A549 (cell line): ENCODE measurements at regions of chr15 and their contacts with region 1.

Region 1: DNA sequence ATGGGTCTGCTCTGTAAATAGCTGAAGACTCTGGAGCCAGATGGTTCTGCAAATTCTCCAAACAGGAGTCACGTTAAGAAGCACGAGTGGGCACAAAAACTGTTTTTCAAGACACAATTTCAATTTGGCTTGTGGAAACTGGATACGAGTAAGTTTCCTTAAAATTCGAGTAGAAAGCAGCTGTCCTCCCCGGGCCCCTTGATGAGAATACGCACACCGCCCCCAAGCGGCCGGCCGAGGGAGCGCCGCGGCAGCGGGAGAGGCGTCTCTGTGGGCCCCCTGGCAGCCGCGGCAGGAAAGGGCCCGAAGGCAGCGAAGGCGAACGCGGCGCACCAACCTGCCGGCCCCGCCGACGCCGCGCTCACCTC is 778 bp upstream of the THBS1 start:
- DNase-seq: peak; percentile 54 to 86
- ATAC-seq: peak; percentile 76 to 81
- H3K4me3 ChIP-seq: peak overlapping the region; percentile 95
- H3K27ac ChIP-seq: peak overlapping the region; percentile 87 to 99
- H3K4me1 ChIP-seq: peaks cover 37% of the 10 kb centered on the region
- CTCF ChIP-seq: peak; percentile 82
- EP300 ChIP-seq: no peak
- POLR2A ChIP-seq: no peak
- RAD21 ChIP-seq: peak; percentile 80 to 94

Region 2: DNA sequence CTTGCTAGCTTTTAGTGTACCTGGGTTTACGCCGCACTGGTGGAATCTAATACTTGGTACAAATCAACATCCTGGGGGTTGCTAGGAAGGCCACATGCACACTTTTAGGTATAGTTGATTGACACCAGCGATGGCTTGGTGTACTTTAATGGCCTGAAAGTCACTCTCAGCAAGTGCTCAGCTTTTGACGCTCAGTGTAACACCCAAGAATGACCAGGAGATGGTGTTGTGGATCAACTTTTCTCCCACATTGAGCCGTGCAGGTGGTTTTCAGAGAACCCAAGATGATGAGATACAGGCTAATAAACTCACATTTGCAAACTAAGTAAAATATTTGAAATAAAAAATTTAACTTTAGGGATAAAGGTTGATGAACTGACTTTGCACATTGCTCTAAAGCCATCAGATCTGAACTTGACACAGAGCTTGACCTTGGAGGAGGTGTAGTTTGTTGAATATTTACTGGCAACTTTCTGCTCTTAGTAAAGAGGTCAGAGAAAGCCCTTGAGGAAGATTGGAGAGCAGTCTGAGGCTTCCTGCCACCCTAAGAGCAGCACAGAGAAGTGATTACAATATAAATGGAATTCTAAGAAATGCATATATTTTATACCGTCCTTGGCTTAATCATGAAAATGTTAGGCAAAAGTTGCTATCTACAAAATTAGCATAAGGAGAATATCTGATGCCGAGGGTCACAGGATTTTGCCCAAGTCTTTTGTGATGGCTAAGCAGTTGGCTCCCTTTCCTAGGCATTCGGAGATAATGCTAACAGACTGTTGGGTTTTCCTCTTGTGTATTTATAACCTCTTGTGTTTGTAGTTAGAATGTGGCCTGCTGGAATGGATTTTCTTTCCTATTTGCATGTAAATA is 872.1 kb before region 1 on chr15:
- CTCF ChIA-PET with region 1: interaction called, 29 read pairs
- POLR2A ChIA-PET with region 1: interaction called, 3 read pairs
- DNase-seq: peak; percentile 25 to 57
- ATAC-seq: peak; percentile 84 to 91
- H3K4me3 ChIP-seq: no peak overlapping the region
- H3K27ac ChIP-seq: 0 out of 6 replicates have a peak overlapping the region, but pooled peaks of 1 of the 2 experiments have one; percentile 16
- H3K4me1 ChIP-seq: peaks cover 6% of the 10 kb centered on the region; the same call in 2 of the 3 replicates
- CTCF ChIP-seq: peak; percentile 81
- EP300 ChIP-seq: no peak
- POLR2A ChIP-seq: no peak
- RAD21 ChIP-seq: peak; percentile 84 to 92

Region 3: DNA sequence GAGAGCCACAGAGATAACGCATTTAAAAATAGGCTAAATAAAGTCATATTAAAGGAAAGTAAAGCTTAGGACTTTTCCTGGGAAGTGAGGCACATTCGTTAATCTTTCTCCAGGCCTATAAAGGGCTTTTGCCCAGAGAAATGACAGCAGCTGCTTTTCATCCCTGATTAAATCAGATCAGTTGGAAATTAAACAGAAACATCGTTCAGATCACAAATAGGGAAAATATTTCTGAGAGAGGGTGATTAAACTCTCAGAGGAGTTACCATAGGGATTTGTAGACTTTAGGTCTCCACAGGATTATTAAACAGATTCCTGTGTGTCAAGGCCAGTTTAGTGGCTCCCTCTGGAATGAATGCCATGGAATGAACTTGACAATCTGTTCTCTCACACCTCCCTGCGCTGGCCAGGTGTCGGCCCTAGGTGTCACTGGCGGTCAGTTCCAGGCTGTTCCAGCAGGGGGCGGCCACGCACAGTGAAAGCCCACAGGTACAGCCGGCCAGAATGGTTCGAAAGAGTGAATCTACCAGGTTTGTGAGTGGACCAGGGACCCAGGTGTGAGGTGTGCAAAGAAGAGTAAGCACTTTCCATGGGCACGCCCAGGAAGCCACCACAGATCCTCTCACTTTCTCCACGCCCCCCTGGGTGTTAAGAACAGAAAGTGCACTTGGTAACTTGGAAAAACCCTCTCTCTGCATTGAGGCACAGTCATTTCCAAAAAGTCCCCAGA is 762.5 kb before region 1 on chr15:
- CTCF ChIA-PET with region 1: interaction called, 18 read pairs
- POLR2A ChIA-PET with region 1: interaction called, 4 read pairs
- DNase-seq: peak; percentile 47 to 74
- ATAC-seq: peak; percentile 97 to 100
- H3K4me3 ChIP-seq: no peak overlapping the region
- H3K27ac ChIP-seq: peak overlapping the region; percentile 68 to 77
- H3K4me1 ChIP-seq: peaks cover 14% of the 10 kb centered on the region
- CTCF ChIP-seq: peak; percentile 87
- EP300 ChIP-seq: no peak
- POLR2A ChIP-seq: no peak
- RAD21 ChIP-seq: peak; percentile 97

Region 4: GRCh38 chr15:39180483-39180933 is 399.6 kb before region 1 on chr15:
- CTCF ChIA-PET with region 1: interaction called, 20 read pairs
- POLR2A ChIA-PET with region 1: interaction called, 3 read pairs
- DNase-seq: no peak
- ATAC-seq: no peak
- H3K4me3 ChIP-seq: no peak overlapping the region
- H3K27ac ChIP-seq: peak overlapping the region; percentile 73 to 80
- H3K4me1 ChIP-seq: peaks cover 36% of the 10 kb centered on the region
- CTCF ChIP-seq: no peak
- EP300 ChIP-seq: no peak
- POLR2A ChIP-seq: no peak
- RAD21 ChIP-seq: no peak

Region 5: DNA sequence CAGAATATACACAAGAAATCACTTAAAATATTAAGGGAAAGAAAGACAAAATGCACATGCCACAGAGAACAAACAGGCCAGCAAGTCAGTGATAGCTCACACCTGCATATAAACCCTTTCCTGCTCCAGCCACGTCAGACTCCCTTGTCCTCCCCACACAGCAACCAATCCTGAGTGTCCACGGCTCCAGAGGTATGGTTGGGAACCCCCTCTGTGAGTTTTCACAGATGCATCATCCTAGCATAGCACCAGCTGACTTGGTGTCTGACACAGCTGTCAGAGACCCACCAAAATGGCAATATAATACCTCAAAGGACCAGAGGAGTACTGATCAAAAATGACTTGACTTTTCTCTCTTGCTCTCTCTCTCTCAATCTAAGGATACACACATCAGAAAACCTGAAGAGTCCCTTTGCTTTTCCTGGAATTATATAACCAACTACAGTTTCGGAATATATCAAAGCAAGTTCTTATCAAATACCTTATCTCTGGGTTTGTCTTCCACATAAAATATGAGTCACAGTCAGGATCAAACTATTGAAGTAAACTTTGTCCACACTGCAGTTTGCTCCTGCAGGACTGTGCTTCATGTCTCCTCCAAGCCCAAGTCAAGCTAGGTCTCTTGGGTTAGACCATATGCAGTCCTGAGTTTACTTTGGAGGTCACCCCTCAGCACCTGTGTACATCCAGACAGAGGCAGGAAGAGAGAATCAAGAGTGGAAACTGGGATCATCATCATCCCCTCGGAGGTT is 186.3 kb before region 1 on chr15:
- CTCF ChIA-PET with region 1: interaction called, 10 read pairs
- POLR2A ChIA-PET with region 1: interaction called, 4 read pairs
- DNase-seq: peak in 1 of 2 experiments; percentile 14
- ATAC-seq: peak; percentile 41 to 64
- H3K4me3 ChIP-seq: no peak overlapping the region
- H3K27ac ChIP-seq: peak overlapping the region; percentile 30 to 41; a peak in 3 of 6 replicates
- H3K4me1 ChIP-seq: peaks cover 35% of the 10 kb centered on the region
- CTCF ChIP-seq: no peak
- EP300 ChIP-seq: no peak
- POLR2A ChIP-seq: no peak
- RAD21 ChIP-seq: no peak